ENCODE measurements at regions of chr17 and their contacts with region 1.

Region 1: GRCh38 chr17:68600067-68600930 is 868 bp downstream of the FAM20A start:
- DNase-seq: no peak
- ATAC-seq: no peak
- H3K4me3 ChIP-seq: no peak overlapping the region
- H3K27ac ChIP-seq: no peak overlapping the region
- H3K4me1 ChIP-seq: no peaks in the 10 kb centered on the region
- H3K27me3 ChIP-seq: no peaks in the 10 kb centered on the region
- CTCF ChIP-seq: no peak
- POLR2A ChIP-seq: no peak
- RAD21 ChIP-seq: no peak

Region 2: DNA sequence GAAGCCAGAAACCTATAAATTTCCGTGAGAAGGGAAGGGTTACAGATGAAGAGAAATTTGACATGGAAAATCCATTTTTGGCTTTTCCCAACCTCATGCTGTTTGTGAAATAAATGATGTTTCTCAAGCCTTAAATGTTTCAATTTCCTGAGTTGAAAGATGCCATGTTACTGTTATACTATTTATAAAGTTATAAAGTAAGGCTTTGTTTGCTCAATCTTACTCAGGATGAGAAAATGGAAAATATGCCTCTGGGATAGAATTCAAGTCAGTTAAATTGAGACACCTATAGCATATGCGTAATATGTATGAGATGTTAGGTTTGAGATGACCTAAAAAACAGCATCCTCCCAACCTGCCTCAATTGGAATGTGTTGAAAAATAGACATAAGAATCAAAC is 20.8 kb after region 1 on chr17:
- CTCF ChIA-PET with region 1: no interaction called
- POLR2A ChIA-PET with region 1: no interaction called
- RAD21 ChIA-PET with region 1: no interaction called
- intact Hi-C with region 1: no loop called
- DNase-seq: no peak
- ATAC-seq: no peak
- H3K4me3 ChIP-seq: no peak overlapping the region
- H3K27ac ChIP-seq: no peak overlapping the region
- H3K4me1 ChIP-seq: no peaks in the 10 kb centered on the region
- H3K27me3 ChIP-seq: no peaks in the 10 kb centered on the region
- CTCF ChIP-seq: no peak
- POLR2A ChIP-seq: no peak
- RAD21 ChIP-seq: no peak

Region 3: DNA sequence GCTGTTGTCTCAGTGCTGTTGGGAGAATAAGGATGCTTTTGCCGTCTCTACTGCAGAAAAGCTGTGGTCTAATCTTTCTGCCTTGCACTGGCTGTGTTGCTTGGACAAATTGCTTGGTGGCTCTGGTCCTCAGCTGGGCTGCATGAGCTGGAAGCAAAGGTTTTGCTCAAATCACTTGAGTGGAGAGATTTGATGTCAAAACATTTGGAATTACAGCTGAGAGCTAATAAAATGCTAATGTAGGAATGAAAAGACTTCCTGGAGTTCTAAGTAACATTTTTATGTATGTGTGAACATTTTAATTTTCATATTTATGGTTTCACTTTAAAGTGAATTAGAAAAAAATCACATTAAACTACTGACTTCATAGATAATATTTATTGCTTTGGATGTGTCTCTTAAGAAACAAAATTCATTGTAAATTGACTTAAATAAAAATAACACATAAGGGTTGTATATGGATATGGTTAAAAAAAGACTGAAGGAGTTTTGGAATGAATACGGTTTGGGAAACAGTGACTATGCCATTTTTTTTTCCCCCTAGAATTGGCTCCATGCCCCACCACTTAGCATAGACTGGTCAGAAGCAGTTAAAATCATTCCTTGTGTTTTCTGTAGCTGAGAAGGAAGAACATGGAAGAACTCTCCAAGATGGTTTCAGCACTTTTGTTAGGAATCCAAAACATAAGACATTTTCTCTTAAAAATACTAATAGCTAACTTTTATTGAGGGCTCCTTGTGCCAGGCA is 40.1 kb after region 1 on chr17:
- CTCF ChIA-PET with region 1: no interaction called
- POLR2A ChIA-PET with region 1: no interaction called
- RAD21 ChIA-PET with region 1: no interaction called
- intact Hi-C with region 1: loop called (anchors 2 kb)
- DNase-seq: no peak
- ATAC-seq: no peak
- H3K4me3 ChIP-seq: no peak overlapping the region
- H3K27ac ChIP-seq: no peak overlapping the region
- H3K4me1 ChIP-seq: no peaks in the 10 kb centered on the region
- H3K27me3 ChIP-seq: no peaks in the 10 kb centered on the region
- CTCF ChIP-seq: no peak
- POLR2A ChIP-seq: no peak
- RAD21 ChIP-seq: no peak

Measured in HCT116 (cell line).